ENCODE measurements at regions of chr2 and their contacts with region 1.

Region 1: GRCh38 chr2:127526149-127527000 is at the start of gene IWS1:
- DNase-seq: peak; percentile 93
- H3K4me3 Mint-ChIP-seq: peak within 1 kb of the TSS; percentile 87
- H3K27ac Mint-ChIP-seq: peak within 1 kb of the TSS; percentile 97
- H3K4me1 Mint-ChIP-seq: peaks cover 31% of the 10 kb centered on the region
- H3K27me3 Mint-ChIP-seq: no peaks in the 10 kb centered on the region
- CTCF ChIP-seq: no peak
- total RNA-seq, gene IWS1: 47.6 and 48.9 TPM in 2 replicates

Region 2: DNA sequence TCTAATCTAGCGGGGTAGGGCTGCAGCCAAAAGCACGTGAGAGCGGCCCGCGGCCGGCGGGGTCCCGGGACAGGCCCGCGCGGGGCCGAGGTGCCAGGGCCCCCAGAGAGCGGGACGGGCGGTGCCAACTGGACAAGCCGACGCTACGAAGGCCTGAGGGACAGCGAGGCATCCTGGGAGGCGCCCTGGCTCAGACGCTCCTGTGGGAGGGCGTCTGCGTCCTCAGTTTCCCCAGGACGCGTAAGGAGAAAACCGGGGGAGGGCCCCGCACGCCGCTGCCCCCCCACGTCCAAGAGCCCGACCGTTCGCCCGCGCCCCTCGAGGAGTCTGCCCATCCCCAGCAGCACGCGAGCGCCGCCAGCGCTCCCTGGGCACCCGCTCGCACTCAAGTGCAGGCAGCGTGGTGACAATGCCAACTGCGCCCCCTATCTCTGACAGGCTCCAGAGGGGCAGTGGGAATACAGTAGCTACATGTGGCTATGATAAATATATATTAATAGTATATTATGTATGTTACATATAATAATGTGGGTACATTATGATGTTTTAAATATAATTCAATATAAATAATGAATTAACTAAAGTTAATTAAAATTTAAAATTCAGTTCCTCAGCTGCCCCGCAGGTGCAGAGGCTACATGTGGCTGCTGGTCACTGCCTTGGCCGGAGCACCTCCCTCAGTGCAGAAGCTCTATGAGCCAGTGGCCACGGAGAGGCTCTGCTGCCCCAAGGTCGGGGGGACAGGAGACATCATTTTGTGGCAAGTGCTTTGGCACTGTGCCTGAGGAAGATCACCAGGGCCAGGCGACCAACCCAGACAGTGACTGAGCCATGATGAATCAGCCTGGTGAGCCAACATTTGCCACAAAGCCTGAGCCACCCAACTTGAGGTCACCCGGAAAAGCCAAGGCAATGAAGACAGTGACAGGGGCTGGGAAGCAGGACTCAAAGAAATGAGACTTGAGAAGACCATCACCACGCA is 169.4 kb after region 1 on chr2:
- CTCF ChIA-PET with region 1: interaction called, 3 read pairs
- intact Hi-C with region 1: loop called (anchors 5 kb)
- DNase-seq: peak; percentile 90
- H3K4me3 Mint-ChIP-seq: peak overlapping the region; percentile 56
- H3K27ac Mint-ChIP-seq: no peak overlapping the region
- H3K4me1 Mint-ChIP-seq: peaks cover 10% of the 10 kb centered on the region
- H3K27me3 Mint-ChIP-seq: no peaks in the 10 kb centered on the region
- CTCF ChIP-seq: peak; percentile 86

Measured in Calu3 (cell line).